PC-3 (cell line): ENCODE measurements at regions of chr2 and their contacts with region 1.

Region 1: GRCh38 chr2:230614913-230615332 is 97.7 kb upstream of the CAB39 start:
- DNase-seq: no peak
- ATAC-seq: no peak
- H3K4me3 ChIP-seq: no peak overlapping the region
- H3K27ac ChIP-seq: no peak overlapping the region
- H3K4me1 ChIP-seq: peaks cover 18% of the 10 kb centered on the region
- H3K27me3 ChIP-seq: no peaks in the 10 kb centered on the region
- CTCF ChIP-seq: no peak

Region 2: DNA sequence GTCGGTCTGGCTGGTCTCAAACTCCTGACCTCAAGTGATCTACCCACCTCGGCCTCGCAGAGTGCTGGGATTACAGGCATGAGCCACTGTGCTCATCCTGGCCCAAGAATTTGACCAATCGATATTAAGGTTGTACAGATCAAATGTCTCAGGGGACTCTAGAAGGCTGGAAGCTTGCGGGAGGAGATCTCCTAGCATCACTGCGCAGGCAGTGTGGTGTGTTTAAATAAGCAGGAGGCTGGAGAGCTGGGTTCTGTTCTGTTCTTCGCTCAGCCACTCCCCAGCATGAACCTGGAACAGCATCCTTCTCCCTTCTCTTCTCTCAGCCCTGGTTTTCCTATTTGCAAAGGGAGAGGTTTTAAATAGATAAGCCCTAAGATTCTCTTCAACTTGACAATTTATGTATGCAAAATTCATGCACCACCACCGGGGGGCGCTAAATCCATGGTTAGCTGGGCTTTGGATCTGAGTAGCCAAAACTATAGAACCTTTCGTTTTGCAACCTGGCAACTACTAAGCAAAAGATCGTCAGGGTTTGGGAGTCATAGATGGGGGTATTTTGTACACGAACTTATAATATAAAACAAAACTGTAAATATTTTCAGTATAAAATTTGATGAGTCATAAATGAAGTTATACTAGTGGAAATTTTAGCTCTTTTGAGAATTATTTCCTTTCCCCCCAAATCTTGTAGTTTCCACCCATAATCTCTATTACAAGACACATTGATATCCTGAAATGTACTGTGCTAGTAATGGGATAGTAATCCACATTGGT is 606.8 kb before region 1 on chr2:
- CTCF ChIA-PET with region 1: no interaction called
- POLR2A ChIA-PET with region 1: no interaction called
- intact Hi-C with region 1: loop called (anchors 1 kb)
- DNase-seq: peak; percentile 84
- ATAC-seq: peak; percentile 66
- H3K4me3 ChIP-seq: peak overlapping the region; percentile 18; the same call in 1 of the 2 replicates
- H3K27ac ChIP-seq: no peak overlapping the region
- H3K4me1 ChIP-seq: peaks cover 4% of the 10 kb centered on the region; the same call in 1 of the 2 replicates
- H3K27me3 ChIP-seq: no peaks in the 10 kb centered on the region
- CTCF ChIP-seq: peak; percentile 87

Region 3: GRCh38 chr2:230346921-230347533 is 267.9 kb before region 1 on chr2:
- CTCF ChIA-PET with region 1: no interaction called
- POLR2A ChIA-PET with region 1: no interaction called
- intact Hi-C with region 1: no loop called
- DNase-seq: no peak
- ATAC-seq: no peak
- H3K4me3 ChIP-seq: no peak overlapping the region
- H3K27ac ChIP-seq: no peak overlapping the region
- H3K4me1 ChIP-seq: no peaks in the 10 kb centered on the region
- H3K27me3 ChIP-seq: no peaks in the 10 kb centered on the region
- CTCF ChIP-seq: no peak

Region 4: DNA sequence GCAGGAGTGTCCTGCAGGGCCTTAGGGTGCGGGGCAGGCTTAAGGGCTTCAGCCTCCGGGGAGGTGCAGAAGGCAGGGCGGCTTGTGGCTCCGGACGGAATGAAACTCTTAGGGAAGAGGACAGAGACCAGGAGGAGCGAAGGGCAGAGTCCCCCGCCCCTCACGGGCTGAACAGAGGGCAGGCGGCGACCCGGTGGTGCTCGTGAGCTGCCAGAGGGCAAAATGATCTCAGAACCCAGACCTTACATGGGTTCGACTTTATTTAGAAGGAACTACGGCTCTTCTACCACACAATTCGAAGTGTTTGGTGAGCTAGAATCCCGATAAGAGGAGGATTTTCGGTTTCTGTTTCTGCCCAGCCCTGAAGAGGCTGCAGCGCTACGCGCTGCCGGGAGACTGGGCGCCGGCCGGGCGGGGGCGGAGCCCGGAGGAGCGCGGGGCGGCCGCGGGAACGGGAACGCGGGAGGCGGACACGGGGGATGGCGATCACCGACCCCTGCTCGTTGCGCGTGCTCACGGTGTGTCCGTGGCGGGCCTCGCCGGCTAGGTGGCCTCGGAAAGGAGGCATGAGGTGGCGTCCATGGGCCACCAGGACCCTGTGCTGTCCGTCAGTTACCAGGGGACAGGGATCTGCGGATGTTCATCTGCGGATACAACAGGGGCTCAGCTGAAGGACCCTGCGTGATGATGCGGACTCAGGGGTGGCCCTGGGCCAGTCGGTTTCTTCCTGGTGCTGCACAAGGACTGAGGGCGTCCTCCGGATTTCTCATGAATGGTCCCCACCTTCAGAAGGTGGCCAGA is 203.2 kb before region 1 on chr2:
- CTCF ChIA-PET with region 1: no interaction called
- POLR2A ChIA-PET with region 1: no interaction called
- intact Hi-C with region 1: loop called (anchors 5 kb)
- DNase-seq: peak; percentile 56
- ATAC-seq: peak; percentile 69
- H3K4me3 ChIP-seq: peak overlapping the region; percentile 78
- H3K27ac ChIP-seq: no peak overlapping the region
- H3K4me1 ChIP-seq: peaks cover 19% of the 10 kb centered on the region
- H3K27me3 ChIP-seq: no peaks in the 10 kb centered on the region
- CTCF ChIP-seq: no peak

Region 5: DNA sequence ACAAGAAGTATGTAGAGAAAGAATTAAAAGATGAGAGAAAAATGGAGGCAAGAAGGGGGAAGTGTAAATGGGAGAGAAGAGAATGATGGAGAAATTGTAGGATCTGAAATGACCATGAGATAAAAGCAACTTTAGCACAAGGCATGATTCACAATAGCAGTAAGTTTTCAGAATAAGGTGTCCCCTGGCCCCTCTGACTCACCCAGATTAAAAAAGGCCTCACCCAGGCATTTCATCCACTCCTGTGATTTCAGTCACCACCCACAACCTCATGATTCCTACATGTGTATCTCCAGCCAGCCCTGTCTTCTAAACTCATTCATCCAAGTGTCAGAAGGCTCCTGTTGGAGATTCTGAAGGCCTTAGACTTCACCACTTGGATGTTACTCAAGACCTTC is 142.3 kb before region 1 on chr2:
- CTCF ChIA-PET with region 1: no interaction called
- POLR2A ChIA-PET with region 1: no interaction called
- intact Hi-C with region 1: loop called (anchors 2 kb)
- DNase-seq: peak; percentile 57
- ATAC-seq: peak; percentile 62
- H3K4me3 ChIP-seq: no peak overlapping the region
- H3K27ac ChIP-seq: no peak overlapping the region
- H3K4me1 ChIP-seq: peaks cover 9% of the 10 kb centered on the region; the same call in 1 of the 2 replicates
- H3K27me3 ChIP-seq: no peaks in the 10 kb centered on the region
- CTCF ChIP-seq: no peak

Region 6: GRCh38 chr2:230712443-230713330 is 97.8 kb after region 1 on chr2 and contains the start of gene CAB39:
- CTCF ChIA-PET with region 1: interaction called, 8 read pairs
- POLR2A ChIA-PET with region 1: interaction called, 3 read pairs
- intact Hi-C with region 1: loop called (anchors 1 kb)
- DNase-seq: peak; percentile 92
- ATAC-seq: peak; percentile 80
- H3K4me3 ChIP-seq: peak within 1 kb of the TSS; percentile 100
- H3K27ac ChIP-seq: peak within 1 kb of the TSS; percentile 92
- H3K4me1 ChIP-seq: peaks cover 28% of the 10 kb centered on the region
- H3K27me3 ChIP-seq: no peaks in the 10 kb centered on the region
- CTCF ChIP-seq: peak; percentile 72
- total RNA-seq, gene CAB39: 52.5 and 59.6 TPM in 2 replicates

Region 7: GRCh38 chr2:230798769-230799399 is 184.0 kb after region 1 on chr2:
- CTCF ChIA-PET with region 1: interaction called, 4 read pairs
- POLR2A ChIA-PET with region 1: interaction called, 3 read pairs
- intact Hi-C with region 1: loop called (anchors 1 kb)
- DNase-seq: peak; percentile 87
- ATAC-seq: peak; percentile 28
- H3K4me3 ChIP-seq: no peak overlapping the region
- H3K27ac ChIP-seq: peak overlapping the region; percentile 98
- H3K4me1 ChIP-seq: peaks cover 51% of the 10 kb centered on the region
- H3K27me3 ChIP-seq: no peaks in the 10 kb centered on the region
- CTCF ChIP-seq: peak; percentile 77